Posterior vena cava (tissue), 2 donors: ENCODE measurements at regions of chr20 and their contacts with region 1.

Region 1: DNA sequence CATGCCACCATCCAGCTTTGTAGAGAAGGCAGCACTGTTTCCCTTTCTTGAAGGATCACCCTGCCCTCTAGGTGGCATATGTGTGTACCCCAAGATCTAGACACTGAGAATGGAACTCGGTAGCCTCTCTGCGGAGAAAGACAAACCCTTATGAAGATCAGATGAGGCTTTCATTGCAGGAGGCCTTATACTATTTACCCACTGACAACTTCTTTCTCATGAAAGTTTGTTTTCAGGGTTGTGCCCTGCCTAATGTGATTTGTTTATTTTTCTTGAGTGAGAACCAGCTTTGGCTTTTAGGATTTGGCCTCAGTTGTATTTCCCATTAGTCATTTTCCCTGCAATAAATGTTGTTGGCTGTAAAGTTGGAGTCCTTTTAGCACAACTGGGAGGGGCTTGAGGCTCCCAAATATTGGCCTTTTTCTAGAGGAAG is 811.4 kb downstream of the DHX35 start:
- DNase-seq: no peak

Region 2: GRCh38 chr20:39702701-39703349 is 70.7 kb before region 1 on chr20:
- intact Hi-C with region 1: loop called in 1 of 2 experiments (anchors 2 kb)
- DNase-seq: no peak